Ovary (tissue), 10 donors: ENCODE measurements at regions of chr5 and their contacts with region 1.

Region 1: DNA sequence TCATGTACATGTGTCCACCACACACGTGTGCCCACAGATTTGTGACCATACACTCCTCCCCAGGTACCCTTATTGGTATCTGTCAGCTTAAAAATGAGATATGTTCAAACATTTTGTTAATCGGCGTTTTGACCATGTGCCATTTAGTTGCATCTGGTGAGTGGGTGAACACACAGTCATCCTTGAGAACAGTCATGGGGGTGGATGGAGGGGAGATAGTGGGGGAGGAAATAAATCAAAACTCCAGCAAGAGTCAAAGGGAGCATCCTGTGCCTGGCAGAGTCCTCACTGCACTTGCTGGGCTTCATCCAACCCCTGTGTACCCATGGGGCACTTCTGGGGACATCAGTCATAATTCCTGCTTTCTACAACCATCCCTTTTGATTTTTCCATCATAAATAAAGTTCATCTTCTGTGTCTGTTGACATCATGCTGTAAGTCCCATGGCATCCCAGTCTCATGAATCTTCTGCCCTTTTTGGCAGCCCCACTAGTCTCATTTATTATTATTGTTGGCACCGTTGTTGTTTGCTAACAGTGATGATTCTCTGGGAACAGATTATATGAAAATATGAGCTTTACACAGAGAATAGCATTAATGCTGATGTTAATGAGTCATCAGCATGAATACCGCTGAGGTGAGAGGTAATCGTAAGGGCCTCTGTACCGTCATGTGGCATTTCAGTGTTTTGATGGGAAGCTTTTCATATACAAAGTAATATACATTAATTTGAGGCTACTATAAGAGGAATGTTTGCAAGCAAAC is 24.4 kb upstream of the CLK4 start:
- DNase-seq: no peak
- H3K4me3 ChIP-seq: no peak overlapping the region
- H3K27ac ChIP-seq: no peak overlapping the region
- H3K4me1 ChIP-seq: no peaks in the 10 kb centered on the region
- H3K27me3 ChIP-seq: no peaks in the 10 kb centered on the region
- CTCF ChIP-seq: no peak
- EP300 ChIP-seq: no peak
- POLR2A ChIP-seq: no peak

Region 2: GRCh38 chr5:178589180-178590140 is 61.8 kb before region 1 on chr5:
- intact Hi-C with region 1: loop called in 1 of 4 experiments (anchors 10 kb)
- DNase-seq: peak in 2 of 5 donors; percentile 22 to 45
- H3K4me3 ChIP-seq: peak overlapping the region; percentile 31
- H3K27ac ChIP-seq: no peak overlapping the region
- H3K4me1 ChIP-seq: peaks cover 4% of the 10 kb centered on the region
- H3K27me3 ChIP-seq: no peaks in the 10 kb centered on the region
- CTCF ChIP-seq: no peak
- EP300 ChIP-seq: no peak
- POLR2A ChIP-seq: no peak